Breast epithelium (tissue), 4 donors: ENCODE measurements at regions of chr10 and their contacts with region 1.

Region 1: GRCh38 chr10:31209478-31209877 is 109.5 kb upstream of the ZEB1 start:
- DNase-seq: no peak
- H3K4me3 ChIP-seq: no peak overlapping the region
- H3K27ac ChIP-seq: no peak overlapping the region
- H3K4me1 ChIP-seq: no peaks in the 10 kb centered on the region
- H3K27me3 ChIP-seq: no peaks in the 10 kb centered on the region
- CTCF ChIP-seq: no peak
- POLR2A ChIP-seq: no peak

Region 2: GRCh38 chr10:30059209-30060107 is 1150.0 kb before region 1 on chr10 and contains the start of gene JCAD:
- intact Hi-C with region 1: no loop called
- DNase-seq: peak; percentile 30 to 57
- H3K4me3 ChIP-seq: peak within 1 kb of the TSS; percentile 67 to 91 (median 85)
- H3K27ac ChIP-seq: peak within 1 kb of the TSS; percentile 70 to 91
- H3K4me1 ChIP-seq: no peaks in the 10 kb centered on the region
- H3K27me3 ChIP-seq: no peaks in the 10 kb centered on the region
- CTCF ChIP-seq: no peak
- POLR2A ChIP-seq: no peak
- total RNA-seq, gene JCAD: 11.1 to 69.3 (median 16.1) TPM

Region 3: DNA sequence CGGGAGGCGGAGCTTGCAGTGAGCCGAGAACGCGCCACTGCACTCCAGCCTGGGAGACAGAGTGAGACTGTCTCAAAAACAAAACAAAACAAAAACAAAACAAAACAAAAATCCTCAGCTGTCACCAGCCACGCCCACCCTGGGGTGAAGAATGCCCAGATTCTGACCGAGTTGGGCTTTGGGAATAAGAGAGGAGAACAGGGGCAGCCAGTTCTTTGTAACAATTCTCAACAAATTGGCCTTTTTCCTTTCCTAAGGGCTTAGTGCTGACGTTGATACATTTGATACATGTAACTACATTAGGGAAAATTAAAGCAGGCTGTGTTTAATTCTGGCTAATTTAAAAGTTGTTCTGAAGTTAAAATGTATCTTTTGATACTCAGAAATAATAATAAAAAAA is 1016.5 kb after region 1 on chr10:
- intact Hi-C with region 1: loop called (anchors 5 kb)
- DNase-seq: no peak
- H3K4me3 ChIP-seq: no peak overlapping the region
- H3K27ac ChIP-seq: no peak overlapping the region
- H3K4me1 ChIP-seq: no peaks in the 10 kb centered on the region
- H3K27me3 ChIP-seq: no peaks in the 10 kb centered on the region
- CTCF ChIP-seq: no peak
- POLR2A ChIP-seq: no peak